ENCODE measurements at regions of chr2 and their contacts with region 1.

Region 1: GRCh38 chr2:67083951-67084350 is 313.2 kb upstream of the ETAA1 start:
- DNase-seq: no peak
- H3K4me3 ChIP-seq: no peak overlapping the region
- CTCF ChIP-seq: no peak

Region 2: DNA sequence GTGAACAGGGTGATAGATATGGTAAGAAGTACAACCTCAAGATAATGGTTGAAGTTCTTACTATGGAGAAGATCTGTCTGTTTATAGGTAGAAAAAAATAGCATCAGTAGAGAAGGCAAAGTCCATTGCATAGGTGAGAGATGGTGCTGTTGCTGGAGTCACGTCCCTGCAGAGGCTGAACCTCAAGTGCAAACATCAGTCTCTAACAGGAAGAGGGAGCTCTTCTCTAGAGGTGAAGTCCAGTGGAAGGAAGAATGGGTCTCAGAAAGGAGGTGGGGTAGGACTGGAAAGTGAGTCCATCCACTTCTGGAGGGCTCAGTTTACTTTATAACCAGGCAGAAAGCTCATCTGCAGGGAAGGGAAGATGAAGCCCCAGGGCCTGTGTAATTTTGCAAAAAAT is 311.3 kb before region 1 on chr2:
- in situ Hi-C with region 1: no loop called
- DNase-seq: no peak
- H3K4me3 ChIP-seq: no peak overlapping the region
- CTCF ChIP-seq: no peak

Region 3: DNA sequence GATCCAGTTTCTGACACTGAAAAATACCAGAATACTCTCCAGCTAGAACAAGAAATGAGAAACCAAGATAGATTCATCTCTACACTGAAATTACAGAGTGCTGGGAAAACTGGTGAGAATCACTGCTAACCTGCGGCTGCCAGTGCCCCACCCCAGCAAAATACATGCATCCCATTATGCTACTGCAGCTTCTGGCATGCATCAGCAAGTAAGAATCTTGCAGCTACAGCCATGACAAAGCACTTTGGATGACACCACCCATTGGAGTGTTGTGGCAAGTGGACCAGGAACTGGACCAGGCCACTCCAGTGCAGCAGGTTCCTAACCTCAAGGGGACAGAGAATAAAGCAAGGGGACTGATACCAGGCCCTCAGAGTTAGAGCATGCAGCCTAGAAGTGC is 65.7 kb before region 1 on chr2:
- in situ Hi-C with region 1: no loop called
- DNase-seq: no peak
- H3K4me3 ChIP-seq: no peak overlapping the region
- CTCF ChIP-seq: no peak

Region 4: GRCh38 chr2:67130531-67131256 is 46.7 kb after region 1 on chr2:
- in situ Hi-C with region 1: loop called (anchors 10 kb)
- DNase-seq: peak; percentile 24
- H3K4me3 ChIP-seq: no peak overlapping the region
- CTCF ChIP-seq: no peak